Right lobe of liver (tissue), 6 donors: ENCODE measurements at regions of chr2 and their contacts with region 1.

Region 1: DNA sequence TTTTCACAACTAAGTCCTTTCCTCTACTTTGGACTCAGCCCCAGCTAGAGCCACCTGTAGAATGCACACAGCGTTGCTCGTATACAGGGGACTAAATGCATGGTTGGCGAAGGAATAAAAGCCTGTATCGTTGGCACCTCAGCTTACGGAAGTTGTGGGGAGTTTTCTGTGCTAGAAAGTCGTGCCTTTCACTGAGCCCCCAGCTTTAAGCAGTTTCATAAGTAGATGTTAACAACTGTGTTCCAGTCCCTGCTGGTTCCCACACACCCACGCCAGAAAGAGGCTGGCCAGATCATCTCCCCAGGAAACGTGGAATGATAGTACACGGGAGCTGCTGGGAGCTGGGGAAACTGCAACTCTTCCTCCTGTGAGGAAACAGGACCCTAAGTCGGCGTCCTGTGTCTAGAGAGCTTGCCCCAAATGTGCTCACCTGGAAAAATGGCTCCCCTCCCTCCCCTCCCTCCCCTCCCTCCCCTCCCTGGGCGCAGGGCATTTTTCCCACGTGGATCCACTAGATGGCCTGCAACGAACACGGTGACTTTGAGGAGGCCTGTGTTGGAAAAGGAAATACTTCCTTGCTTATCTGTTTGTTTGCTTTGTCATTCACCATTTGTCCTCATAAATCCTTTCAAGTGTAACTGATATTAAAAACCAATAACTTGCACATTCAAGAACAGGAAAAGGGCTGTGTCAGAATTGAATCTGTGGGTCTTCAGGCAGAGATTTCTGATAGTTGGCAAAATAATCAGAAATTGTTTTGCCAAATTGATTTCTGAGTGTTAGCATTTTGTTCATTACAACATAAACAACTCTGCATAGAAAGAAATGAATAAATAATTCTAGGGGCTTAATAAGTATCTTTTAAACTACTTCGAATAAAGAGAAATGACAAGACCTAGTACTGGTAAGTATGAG is 43.9 kb upstream of the RFX8 start:
- DNase-seq: peak; percentile 58 to 71 (median 64)
- ATAC-seq: peak; percentile 82 to 95 (median 93)
- H3K4me3 ChIP-seq: peak overlapping the region in 1 of 3 donors; percentile 38
- H3K27ac ChIP-seq: no peak overlapping the region
- H3K4me1 ChIP-seq: peaks cover 0 to 12% (median 2%) of the 10 kb centered on the region in 4 donors
- H3K27me3 ChIP-seq: no peaks in the 10 kb centered on the region
- CTCF ChIP-seq: peak; percentile 28 to 52 (median 49)
- POLR2A ChIP-seq: no peak

Region 2: GRCh38 chr2:101638181-101638711 is 119.4 kb after region 1 on chr2:
- intact Hi-C with region 1: no loop called
- DNase-seq: no peak
- ATAC-seq: peak; percentile 9 to 59 (median 56)
- H3K4me3 ChIP-seq: no peak overlapping the region
- H3K27ac ChIP-seq: no peak overlapping the region
- H3K4me1 ChIP-seq: no peaks in the 10 kb centered on the region
- H3K27me3 ChIP-seq: no peaks in the 10 kb centered on the region
- CTCF ChIP-seq: no peak
- POLR2A ChIP-seq: no peak

Region 3: GRCh38 chr2:101818531-101819451 is 300.0 kb after region 1 on chr2:
- intact Hi-C with region 1: loop called in 1 of 2 experiments (anchors 10 kb)
- DNase-seq: no peak
- ATAC-seq: peak in 3 of 4 donors; percentile 8 to 17 (median 14)
- H3K4me3 ChIP-seq: no peak overlapping the region
- H3K27ac ChIP-seq: peak overlapping the region in 1 of 3 donors; percentile 35
- H3K4me1 ChIP-seq: peaks cover 0 to 47% (median 19%) of the 10 kb centered on the region in 4 donors
- H3K27me3 ChIP-seq: no peaks in the 10 kb centered on the region
- CTCF ChIP-seq: no peak
- POLR2A ChIP-seq: no peak